ENCODE measurements at regions of chr14 and their contacts with region 1.

Region 1: GRCh38 chr14:22994762-22995275 is 12.5 kb upstream of the AJUBA start:
- DNase-seq: no peak
- H3K4me3 ChIP-seq: no peak overlapping the region
- H3K27ac ChIP-seq: no peak overlapping the region
- H3K27me3 ChIP-seq: no peaks in the 10 kb centered on the region
- CTCF ChIP-seq: peak; percentile 78

Region 2: GRCh38 chr14:22973217-22974032 is 21.4 kb before region 1 on chr14:
- CTCF ChIA-PET with region 1: interaction called, 30 read pairs
- POLR2A ChIA-PET with region 1: no interaction called
- DNase-seq: no peak
- H3K4me3 ChIP-seq: no peak overlapping the region
- H3K27ac ChIP-seq: no peak overlapping the region
- H3K27me3 ChIP-seq: no peaks in the 10 kb centered on the region
- CTCF ChIP-seq: peak; percentile 68

Region 3: DNA sequence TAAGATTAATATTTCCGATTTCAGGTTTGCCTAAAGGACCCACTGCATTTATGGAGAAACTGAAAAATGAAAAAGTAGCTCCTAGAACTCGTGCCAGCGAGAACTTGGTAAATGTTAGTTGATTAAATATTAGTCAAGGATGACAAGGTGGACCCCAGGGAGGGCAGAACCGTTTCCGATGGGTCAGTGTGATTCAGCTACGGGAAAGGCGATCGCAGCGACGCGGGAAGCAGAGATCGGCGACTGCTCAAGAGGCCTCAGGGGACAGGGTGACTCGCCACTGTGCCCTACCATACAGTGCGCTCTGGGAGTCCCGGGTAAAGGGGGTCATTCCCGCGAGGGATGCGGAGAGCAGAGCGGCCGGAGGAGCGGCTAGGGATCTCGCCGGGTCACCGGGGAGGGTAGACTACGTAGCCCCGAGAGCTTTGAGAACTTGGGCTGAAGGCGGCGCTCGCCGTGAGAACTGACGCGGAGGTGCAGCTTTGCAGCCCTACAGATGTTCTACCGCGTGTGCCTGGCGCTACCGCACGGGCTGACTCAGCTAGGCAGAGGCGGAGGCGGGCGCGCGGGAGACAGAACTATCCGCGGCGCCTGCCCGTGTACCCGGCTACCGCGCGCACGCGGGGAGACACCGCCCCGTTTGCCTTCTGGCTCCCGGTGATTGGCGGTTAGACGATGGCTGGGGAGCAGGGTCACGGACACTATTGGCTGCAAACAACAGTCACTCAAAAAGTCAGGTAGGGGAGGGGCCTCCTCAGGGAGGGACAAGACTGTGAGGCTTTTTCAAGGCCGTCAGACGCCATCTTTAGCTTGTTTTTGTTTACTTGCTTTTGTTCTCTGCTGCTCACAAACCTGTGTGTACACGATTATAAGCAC is 12.0 kb after region 1 on chr14:
- CTCF ChIA-PET with region 1: interaction called, 52 read pairs
- POLR2A ChIA-PET with region 1: interaction called, 9 read pairs
- DNase-seq: peak; percentile 95
- H3K4me3 ChIP-seq: peak overlapping the region; percentile 80
- H3K27ac ChIP-seq: peak overlapping the region; percentile 92
- H3K27me3 ChIP-seq: no peaks in the 10 kb centered on the region
- CTCF ChIP-seq: peak; percentile 40

Region 4: DNA sequence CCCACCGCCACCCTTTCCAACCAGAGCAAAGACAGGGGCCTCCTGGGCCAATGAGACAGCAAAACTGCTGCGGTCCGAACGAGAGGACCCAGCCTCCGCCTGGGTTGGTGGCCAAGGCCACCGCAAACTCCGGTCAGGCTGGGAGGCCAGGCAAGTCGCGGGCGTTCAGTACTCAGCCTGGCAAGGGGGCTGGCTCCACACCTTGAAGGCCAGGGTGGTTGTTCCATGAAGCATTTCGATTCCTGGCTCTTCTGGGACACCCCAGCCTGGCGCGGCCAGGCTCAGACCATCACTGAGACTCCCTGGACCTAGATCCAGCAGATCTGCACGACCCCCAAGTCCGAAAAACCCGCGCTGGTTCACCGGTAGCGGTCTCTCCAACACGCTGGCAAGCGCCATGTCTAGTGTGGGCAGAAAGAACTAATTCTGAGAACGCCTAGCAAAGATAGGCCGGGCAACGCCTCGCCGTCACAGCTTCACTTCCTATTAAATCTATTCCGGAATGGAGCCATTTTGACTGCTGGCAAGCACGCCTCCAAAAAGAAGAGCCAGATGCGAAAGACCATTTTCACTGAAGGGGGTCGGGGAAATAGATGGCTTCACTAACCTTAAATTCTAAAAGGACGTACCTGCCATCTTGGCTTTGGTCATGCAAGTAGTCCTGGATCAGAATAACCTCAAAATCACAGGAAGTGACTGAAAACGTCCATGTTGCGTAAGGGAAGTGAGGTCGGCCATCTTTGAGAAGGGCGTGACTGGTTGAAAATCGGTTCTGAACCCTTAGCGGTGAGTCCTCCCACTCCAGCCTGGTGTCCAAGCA is 39.9 kb after region 1 on chr14 and contains the start of gene PSMB5:
- CTCF ChIA-PET with region 1: interaction called, 12 read pairs
- POLR2A ChIA-PET with region 1: no interaction called
- DNase-seq: peak; percentile 83
- H3K4me3 ChIP-seq: peak within 1 kb of the TSS; percentile 93
- H3K27ac ChIP-seq: peak within 1 kb of the TSS; percentile 94
- H3K27me3 ChIP-seq: no peaks in the 10 kb centered on the region
- CTCF ChIP-seq: no peak
- polyA plus RNA-seq, gene PSMB5: 282 and 292 TPM in 2 replicates

Region 5: DNA sequence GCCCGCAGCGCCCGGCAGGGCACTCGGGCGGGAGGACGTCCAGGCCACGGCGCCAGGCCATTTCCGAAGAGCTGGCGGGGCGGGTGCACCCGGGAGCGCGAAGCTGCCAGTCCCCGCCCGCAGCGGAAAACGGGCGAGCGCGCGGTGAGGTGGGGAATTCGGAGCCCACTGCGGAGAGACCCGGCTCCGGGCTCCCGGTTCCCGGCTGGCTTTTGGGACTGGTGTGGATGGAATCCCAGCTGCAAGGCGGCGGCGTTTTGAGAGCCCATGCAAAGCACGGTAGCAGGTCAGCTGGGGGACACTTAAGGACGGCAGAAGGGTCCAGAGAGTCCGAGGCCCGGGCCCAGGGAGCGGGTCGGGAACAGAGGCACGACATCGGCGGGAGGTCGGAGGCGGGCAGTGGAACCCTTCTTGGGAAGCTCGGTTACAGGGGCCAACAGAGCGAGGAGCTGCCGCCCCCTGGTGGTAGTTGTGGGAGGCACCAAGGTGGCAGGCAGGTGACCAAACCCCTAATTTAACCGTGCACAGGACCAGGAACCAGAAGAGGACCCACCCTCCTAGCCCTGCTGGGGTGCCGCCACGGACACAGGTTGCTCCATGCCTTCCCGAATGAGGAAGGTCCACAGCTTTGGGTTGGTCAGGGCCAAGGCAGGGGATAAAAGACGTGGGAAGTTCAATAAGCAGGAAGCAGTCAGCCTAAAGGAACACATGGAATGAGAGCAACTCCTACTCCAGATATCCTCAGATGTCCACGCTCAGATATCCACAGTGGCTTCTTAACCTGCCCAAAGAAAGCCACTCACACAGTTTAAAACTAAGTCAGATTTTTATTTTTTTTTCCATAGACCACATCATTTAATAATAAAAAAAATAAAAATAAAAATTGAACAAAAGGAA is 63.2 kb after region 1 on chr14:
- CTCF ChIA-PET with region 1: interaction called, 262 read pairs
- POLR2A ChIA-PET with region 1: interaction called, 11 read pairs
- DNase-seq: peak; percentile 45
- H3K4me3 ChIP-seq: peak overlapping the region; percentile 61
- H3K27ac ChIP-seq: peak overlapping the region; percentile 52
- H3K27me3 ChIP-seq: no peaks in the 10 kb centered on the region
- CTCF ChIP-seq: peak; percentile 96

Region 6: DNA sequence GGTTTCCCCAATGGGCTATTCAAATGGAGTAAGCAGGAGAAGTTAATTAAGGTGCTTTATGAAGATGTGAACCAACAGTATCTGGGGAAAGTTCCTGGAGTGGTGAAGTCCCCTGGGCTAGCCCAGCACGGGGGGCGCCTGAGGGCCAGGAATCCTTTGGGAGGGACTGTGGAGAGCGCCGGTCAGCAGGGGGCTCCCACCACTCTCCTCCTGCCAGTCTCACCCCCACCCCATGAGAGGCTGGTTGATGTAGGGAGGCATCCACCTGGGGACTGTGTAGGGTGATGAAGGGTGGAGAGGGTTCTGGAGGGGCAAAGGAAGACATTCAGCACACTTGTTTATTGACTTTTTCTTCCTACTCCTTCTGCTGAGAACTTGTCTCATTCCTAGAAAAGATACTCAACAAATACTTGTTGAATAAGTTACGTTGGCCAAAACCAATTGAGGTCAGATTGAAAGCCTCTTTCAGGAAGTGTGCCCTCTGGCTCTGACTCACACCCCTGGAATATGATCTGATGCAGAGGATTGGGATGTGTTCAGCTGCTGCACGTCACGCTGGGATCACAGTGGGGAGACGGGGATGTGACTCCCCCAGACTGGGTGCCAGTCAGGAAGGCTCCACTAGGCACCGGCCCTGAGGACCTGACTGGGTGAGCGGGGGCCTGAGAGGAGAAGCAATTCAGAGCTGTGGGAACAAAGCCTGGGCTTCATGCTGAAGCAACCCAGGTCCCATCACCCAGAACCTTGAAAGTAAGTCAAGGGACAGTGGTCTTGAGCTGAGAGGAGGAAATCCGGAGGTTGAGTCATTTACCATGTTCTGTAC is 120.1 kb after region 1 on chr14:
- CTCF ChIA-PET with region 1: interaction called, 18 read pairs
- POLR2A ChIA-PET with region 1: no interaction called
- DNase-seq: peak; percentile 89
- H3K4me3 ChIP-seq: peak overlapping the region; percentile 17; the same call in 1 of the 2 replicates
- H3K27ac ChIP-seq: peak overlapping the region; percentile 91
- H3K27me3 ChIP-seq: no peaks in the 10 kb centered on the region
- CTCF ChIP-seq: peak; percentile 16